ENCODE measurements at regions of chr2 and their contacts with region 1.

Region 1: DNA sequence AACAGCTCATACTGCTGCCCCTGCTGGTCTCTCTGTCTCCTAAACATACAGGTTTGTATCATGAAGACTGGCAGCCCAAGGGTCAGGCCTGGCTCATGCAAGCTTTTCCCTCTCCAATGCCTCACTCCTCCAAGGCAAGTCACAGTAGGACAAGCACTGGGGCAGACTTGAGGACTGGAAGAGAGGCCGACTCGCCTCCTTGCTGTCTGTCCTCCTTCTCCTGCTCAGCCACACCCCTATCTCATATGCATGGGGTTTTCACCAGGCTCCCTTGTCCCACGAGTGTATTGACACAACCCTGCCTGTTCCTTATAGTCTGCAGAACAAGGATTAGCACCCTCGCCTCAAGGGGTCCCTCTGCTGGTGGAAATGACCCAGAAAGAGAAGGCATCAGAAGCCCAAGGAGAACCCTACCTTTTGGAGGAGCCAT is 223.7 kb downstream of the SOX11 start:
- DNase-seq: no peak
- ATAC-seq: peak in 2 of 4 donors; percentile 19 to 32
- H3K4me3 ChIP-seq: no peak overlapping the region
- H3K27ac ChIP-seq: peak overlapping the region; percentile 45 to 91 (median 76)
- H3K4me1 ChIP-seq: peaks cover 0 to 21% (median 7%) of the 10 kb centered on the region in 12 donors
- H3K27me3 ChIP-seq: no peaks in the 10 kb centered on the region
- CTCF ChIP-seq: peak in 11 of 12 donors; percentile 10 to 46 (median 39)
- POLR2A ChIP-seq: no peak

Region 2: GRCh38 chr2:4992226-4992625 is 923.7 kb before region 1 on chr2:
- intact Hi-C with region 1: loop called in 1 of 10 experiments (anchors 10 kb)
- DNase-seq: no peak
- ATAC-seq: peak in 2 of 4 donors; percentile 45 to 66
- H3K4me3 ChIP-seq: no peak overlapping the region
- H3K27ac ChIP-seq: no peak overlapping the region
- H3K4me1 ChIP-seq: no peaks in the 10 kb centered on the region
- H3K27me3 ChIP-seq: peaks cover 0 to 4% (median 0%) of the 10 kb centered on the region in 9 donors
- CTCF ChIP-seq: peak in 9 of 12 donors; percentile 8 to 55 (median 29)
- POLR2A ChIP-seq: no peak

Region 3: DNA sequence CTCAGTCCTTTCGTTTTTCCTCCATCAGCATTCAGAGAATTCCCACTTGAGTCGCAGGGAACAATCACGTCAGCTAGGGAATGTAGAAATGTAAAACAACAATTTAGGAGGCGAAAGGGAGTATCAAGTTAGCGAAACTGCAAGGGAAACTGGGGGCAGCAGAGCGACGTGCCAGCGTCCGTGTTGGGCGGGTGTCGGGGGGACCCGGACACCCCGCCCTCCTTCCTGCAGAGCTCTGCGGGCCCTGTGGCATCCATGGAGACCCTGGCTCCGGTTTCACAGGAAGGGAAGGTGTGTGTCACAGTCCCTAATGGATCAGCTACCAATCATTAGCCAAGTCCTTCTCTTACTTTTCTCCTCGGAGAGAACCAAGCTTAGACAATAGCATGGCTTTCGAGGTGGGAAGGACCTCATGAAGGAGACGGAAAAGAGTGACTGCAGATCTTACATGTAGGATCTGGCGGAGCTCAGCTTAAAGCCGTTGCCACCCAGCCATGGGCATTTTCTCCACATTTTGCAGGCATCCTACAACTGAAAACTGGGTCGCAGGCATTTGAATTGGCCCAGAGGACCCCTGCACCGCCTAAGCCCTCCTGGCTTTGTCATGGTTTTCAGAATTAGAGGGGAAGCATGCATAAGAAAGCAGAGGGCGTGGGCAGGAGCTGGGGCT is 190.0 kb before region 1 on chr2:
- intact Hi-C with region 1: loop called in 1 of 10 experiments (anchors 10 kb)
- DNase-seq: no peak
- ATAC-seq: peak; percentile 34 to 72 (median 49)
- H3K4me3 ChIP-seq: peak overlapping the region in 11 of 12 donors; percentile 20 to 48 (median 36)
- H3K27ac ChIP-seq: no peak overlapping the region
- H3K4me1 ChIP-seq: peaks cover 0 to 11% (median 0%) of the 10 kb centered on the region in 12 donors
- H3K27me3 ChIP-seq: peaks cover 0 to 3% (median 0%) of the 10 kb centered on the region in 9 donors
- CTCF ChIP-seq: no peak
- POLR2A ChIP-seq: no peak

Region 4: DNA sequence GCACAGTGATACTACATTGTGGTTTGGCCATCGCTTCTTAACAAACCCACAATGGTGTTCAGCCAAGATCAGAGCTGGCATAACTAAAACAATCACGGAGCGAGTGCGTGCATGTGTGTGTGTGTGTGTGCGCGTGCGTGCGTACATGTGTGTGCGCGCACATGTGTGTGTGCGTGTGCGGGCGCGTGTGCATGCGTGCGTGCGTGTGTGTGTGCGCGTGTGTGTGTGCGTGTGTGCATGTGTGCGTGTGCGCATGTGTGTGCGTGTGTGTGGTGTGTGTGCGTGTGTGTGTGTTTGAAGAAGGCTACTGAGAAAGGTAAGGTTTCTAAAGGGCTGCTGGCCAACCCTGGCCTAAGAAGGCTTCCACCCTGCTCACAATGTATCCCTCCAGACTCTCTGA is 367.4 kb after region 1 on chr2:
- intact Hi-C with region 1: no loop called
- DNase-seq: no peak
- ATAC-seq: no peak
- H3K4me3 ChIP-seq: no peak overlapping the region
- H3K27ac ChIP-seq: no peak overlapping the region
- H3K4me1 ChIP-seq: no peaks in the 10 kb centered on the region
- H3K27me3 ChIP-seq: no peaks in the 10 kb centered on the region
- CTCF ChIP-seq: no peak
- POLR2A ChIP-seq: no peak

Measured in heart left ventricle (tissue), 16 donors.